K562 (cell line): ENCODE measurements at regions of chr15 and their contacts with region 1.

Region 1: GRCh38 chr15:34665498-34666116 is 82.2 kb upstream of the GOLGA8B start:
- DNase-seq: no peak
- ATAC-seq: no peak
- H3K4me3 ChIP-seq: no peak overlapping the region
- H3K27ac ChIP-seq: peak overlapping the region; percentile 54
- H3K4me1 ChIP-seq: peaks cover 7 to 37% of the 10 kb centered on the region in 2 experiments
- H3K27me3 ChIP-seq: no peaks in the 10 kb centered on the region
- CTCF ChIP-seq: no peak
- EP300 ChIP-seq: no peak
- POLR2A ChIP-seq: no peak
- RAD21 ChIP-seq: no peak

Region 2: DNA sequence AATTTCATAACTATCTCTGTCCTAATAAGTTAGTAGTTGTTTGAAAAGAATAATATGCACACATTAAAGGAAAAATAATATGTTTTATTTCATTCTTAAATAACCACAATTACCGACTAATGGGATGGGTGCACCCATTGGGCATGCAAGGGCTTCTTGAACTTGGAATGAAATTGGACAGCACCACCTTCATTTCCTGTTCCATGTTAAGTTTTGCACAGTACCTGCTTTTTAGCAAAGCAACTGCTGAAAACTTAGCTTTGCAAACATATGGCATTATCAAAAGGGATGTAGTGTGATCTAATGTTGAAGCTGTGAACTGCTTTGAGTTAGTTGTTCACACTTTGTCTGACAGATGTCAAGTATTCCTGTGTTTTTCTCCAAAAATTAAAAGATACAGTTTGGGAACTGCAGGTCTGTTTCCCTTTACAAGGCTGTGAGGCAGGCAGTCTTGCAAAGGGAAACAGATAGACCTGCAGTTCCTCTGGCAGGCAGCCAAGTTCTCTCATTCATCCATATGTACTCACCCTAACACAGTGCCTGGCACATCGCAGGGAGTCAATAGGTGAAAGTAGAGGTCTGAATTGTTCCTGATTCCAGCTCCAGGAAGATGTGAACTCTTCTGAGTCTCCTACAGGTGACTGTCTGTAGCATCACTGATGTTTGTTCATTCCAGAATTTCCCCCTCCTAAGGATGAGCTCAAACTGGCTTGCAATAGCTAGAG is 17.9 kb before region 1 on chr15:
- CTCF ChIA-PET with region 1: no interaction called
- POLR2A ChIA-PET with region 1: interaction called, 4 read pairs
- in situ Hi-C with region 1: no loop called
- intact Hi-C with region 1: loop called (anchors 2 kb)
- DNase-seq: peak in 3 of 4 experiments; percentile 24 to 91 (median 44)
- ATAC-seq: peak; percentile 72
- H3K4me3 ChIP-seq: peak overlapping the region; percentile 31
- H3K27ac ChIP-seq: peak overlapping the region; percentile 34
- H3K4me1 ChIP-seq: peaks cover 2 to 62% of the 10 kb centered on the region in 2 experiments; a peak in 4 of 5 replicates
- H3K27me3 ChIP-seq: no peaks in the 10 kb centered on the region
- CTCF ChIP-seq: no peak
- EP300 ChIP-seq: no peak
- POLR2A ChIP-seq: peak; percentile 58; the same call in 1 of the 2 replicates
- RAD21 ChIP-seq: peak in 1 of 2 experiments; percentile 42; a peak in 2 of 4 replicates

Region 3: DNA sequence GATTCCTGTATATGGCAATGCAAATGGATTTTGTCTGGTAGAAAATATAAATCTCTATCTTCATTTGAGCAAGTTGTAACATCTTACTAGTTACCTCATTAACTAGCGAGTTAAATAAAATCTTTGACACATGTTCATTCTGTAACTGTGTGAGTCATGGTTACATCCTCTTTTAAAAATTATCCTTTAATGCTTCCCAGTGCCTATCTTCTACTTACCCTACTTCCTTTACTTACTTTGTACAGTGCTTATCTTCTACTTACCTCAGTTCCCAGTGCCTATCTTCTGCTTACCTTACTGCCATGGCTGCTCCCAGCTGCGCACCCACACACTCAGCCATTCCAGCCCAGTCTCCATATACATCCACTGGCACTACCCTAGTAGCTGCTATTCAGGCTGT is 10.3 kb before region 1 on chr15:
- CTCF ChIA-PET with region 1: no interaction called
- POLR2A ChIA-PET with region 1: interaction called, 10 read pairs
- in situ Hi-C with region 1: no loop called
- intact Hi-C with region 1: loop called (anchors 2 kb)
- DNase-seq: peak; percentile 54 to 77 (median 56)
- ATAC-seq: peak; percentile 42
- H3K4me3 ChIP-seq: no peak overlapping the region
- H3K27ac ChIP-seq: peak overlapping the region; percentile 70
- H3K4me1 ChIP-seq: peaks cover 15 to 62% of the 10 kb centered on the region in 2 experiments
- H3K27me3 ChIP-seq: no peaks in the 10 kb centered on the region
- CTCF ChIP-seq: no peak
- EP300 ChIP-seq: peak; percentile 92
- POLR2A ChIP-seq: no peak; the same call in 1 of the 2 replicates
- RAD21 ChIP-seq: 0 out of 4 replicates have a peak, but pooled peaks of 1 of the 2 experiments have one; percentile 10